ENCODE measurements at regions of chr2 and their contacts with region 1.

Region 1: DNA sequence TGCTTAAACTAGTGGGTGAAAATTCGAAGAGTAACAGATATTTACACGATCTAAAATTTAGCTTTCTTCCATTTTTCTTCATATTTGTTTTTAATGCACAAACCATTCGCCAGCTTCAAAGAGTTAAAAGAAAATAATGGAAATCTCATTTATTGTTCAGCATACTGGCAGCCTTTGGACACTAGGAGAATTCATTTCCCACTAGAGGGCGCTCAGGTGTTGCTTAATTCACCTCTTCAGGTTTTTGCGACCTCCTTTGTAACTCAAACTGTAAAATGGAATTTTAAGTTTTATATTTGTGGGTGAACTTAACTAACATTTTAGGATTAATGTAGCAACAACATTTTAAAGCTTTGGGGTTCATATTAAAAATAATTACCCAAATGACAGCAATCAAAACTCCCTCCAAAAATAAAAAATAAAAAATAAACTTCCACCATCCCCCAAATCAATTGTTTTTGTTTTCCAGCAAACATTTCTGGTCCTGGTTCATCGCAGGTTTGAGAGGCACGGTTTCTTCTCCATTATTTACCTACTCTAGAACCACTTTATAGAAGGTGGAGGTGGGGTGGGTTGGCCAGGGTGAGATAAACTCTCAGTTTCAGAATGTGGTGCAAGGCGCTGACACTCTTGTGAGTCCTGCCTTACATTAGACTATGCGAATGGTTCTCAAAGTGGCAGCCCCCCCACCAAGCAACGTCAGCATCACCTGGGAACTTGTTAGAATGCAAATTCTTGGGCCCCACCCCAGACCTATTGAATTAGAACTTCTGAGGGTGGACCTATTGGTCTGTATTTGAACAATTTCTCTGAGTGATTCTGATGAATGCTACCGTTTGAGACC is 24.7 kb upstream of the PNPT1 start:
- DNase-seq: peak; percentile 7
- ATAC-seq: peak; percentile 92
- H3K4me3 ChIP-seq: no peak overlapping the region
- H3K27ac ChIP-seq: no peak overlapping the region
- H3K4me1 ChIP-seq: no peaks in the 10 kb centered on the region
- H3K27me3 ChIP-seq: no peaks in the 10 kb centered on the region; a peak in 2 of 4 replicates
- CTCF ChIP-seq: peak; percentile 71 to 77 (median 74)
- EP300 ChIP-seq: no peak
- POLR2A ChIP-seq: no peak
- RAD21 ChIP-seq: peak; percentile 82

Region 2: DNA sequence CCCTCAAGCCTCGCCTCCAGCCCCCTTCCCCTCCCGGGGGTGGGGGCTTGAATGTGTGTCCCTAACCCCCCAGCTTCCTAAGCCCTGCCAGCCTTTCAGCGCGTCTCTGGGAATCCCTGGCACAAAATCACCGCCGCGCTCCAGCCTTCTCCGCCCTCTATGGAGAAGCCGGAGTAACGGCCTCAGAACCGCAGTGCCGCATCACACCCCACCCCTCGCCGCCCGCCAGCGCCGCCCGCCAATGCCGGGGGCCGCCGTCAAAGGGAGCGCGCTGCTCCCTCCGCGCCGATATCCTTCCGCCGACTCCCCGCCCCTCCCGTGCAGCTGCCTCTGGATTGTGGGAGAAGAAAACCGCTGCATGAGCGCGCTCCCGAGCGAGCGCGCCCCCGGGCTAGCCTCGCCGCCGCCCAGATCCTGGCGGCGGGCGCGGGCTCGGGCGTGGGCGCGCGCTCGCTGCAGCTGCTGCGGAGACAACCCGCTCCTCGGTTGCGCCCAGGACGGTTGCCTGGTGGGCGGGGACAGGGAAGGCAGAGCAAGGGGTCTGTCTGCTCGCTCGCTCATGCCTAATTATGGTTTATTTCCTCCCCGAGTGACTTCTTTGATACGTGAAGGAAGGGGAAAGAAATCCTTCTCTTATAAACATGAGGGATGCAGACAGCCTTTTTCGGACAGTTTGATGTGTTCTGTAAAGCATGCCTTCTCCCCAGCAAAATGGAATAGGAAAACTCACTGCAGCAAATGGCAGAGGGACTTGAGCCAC is 298.5 kb before region 1 on chr2 and contains the start of gene CCDC88A:
- CTCF ChIA-PET with region 1: no interaction called
- POLR2A ChIA-PET with region 1: no interaction called
- RAD21 ChIA-PET with region 1: no interaction called
- SMC1A ChIA-PET with region 1: no interaction called
- in situ Hi-C with region 1: no loop called
- intact Hi-C with region 1: no loop called
- DNase-seq: peak; percentile 59
- ATAC-seq: peak; percentile 83
- H3K4me3 ChIP-seq: peak within 1 kb of the TSS; percentile 94
- H3K27ac ChIP-seq: peak within 1 kb of the TSS; percentile 75
- H3K4me1 ChIP-seq: peaks cover 3% of the 10 kb centered on the region; the same call in 1 of the 2 replicates
- H3K27me3 ChIP-seq: no peaks in the 10 kb centered on the region
- CTCF ChIP-seq: peak in 1 of 3 experiments; percentile 15; a peak in 1 of 6 replicates
- EP300 ChIP-seq: no peak
- POLR2A ChIP-seq: peak; percentile 89
- RAD21 ChIP-seq: no peak
- polyA plus RNA-seq, gene CCDC88A: 27.7 to 30.2 TPM

Region 3: DNA sequence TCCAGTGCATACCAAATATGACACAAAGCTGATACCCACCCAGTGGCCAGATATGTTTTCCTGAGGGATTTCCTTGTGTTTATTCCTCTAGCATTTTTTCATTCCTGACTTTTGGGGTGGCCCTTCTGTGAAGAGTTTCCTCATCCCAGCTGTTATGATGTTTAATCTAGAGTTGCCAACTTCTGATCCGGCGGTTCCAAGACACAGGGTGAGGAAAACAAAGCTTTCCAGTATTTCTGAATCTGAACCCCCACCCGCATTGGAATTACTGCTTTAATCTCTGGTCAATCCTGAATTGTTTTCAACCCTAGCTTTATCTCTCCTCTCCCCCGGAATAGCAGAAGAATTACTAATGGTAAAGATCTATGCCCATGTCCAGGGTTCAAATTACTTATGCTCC is 14.5 kb after region 1 on chr2:
- CTCF ChIA-PET with region 1: interaction called, 13 read pairs
- POLR2A ChIA-PET with region 1: no interaction called
- RAD21 ChIA-PET with region 1: no interaction called
- SMC1A ChIA-PET with region 1: no interaction called
- in situ Hi-C with region 1: no loop called
- intact Hi-C with region 1: no loop called
- DNase-seq: no peak
- ATAC-seq: no peak
- H3K4me3 ChIP-seq: no peak overlapping the region
- H3K27ac ChIP-seq: no peak overlapping the region
- H3K4me1 ChIP-seq: no peaks in the 10 kb centered on the region
- H3K27me3 ChIP-seq: no peaks in the 10 kb centered on the region
- CTCF ChIP-seq: no peak
- EP300 ChIP-seq: no peak
- POLR2A ChIP-seq: no peak
- RAD21 ChIP-seq: no peak

Region 4: DNA sequence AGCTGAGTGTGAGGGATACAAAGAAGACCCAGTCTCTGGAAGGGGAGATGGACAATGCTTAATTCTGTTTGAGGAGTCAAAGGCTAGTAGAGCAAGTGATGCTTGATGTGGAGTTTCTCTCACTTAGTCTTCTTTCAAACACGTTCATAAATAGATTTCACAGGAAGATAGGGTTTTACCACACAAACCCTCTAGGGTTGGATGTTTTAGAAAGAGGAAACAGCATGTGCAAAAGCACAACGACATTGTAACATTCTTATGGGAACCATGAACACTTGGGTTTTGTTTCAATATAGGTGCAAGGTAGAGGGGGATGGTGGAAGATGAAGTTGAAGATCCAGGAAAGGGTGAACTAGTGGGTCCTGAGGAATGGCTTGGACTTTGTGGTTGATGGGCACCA is 215.9 kb after region 1 on chr2:
- CTCF ChIA-PET with region 1: interaction called, 13 read pairs
- POLR2A ChIA-PET with region 1: no interaction called
- RAD21 ChIA-PET with region 1: no interaction called
- SMC1A ChIA-PET with region 1: no interaction called
- in situ Hi-C with region 1: no loop called
- intact Hi-C with region 1: no loop called
- DNase-seq: no peak
- ATAC-seq: no peak
- H3K4me3 ChIP-seq: no peak overlapping the region
- H3K27ac ChIP-seq: no peak overlapping the region
- H3K4me1 ChIP-seq: no peaks in the 10 kb centered on the region
- H3K27me3 ChIP-seq: no peaks in the 10 kb centered on the region; a peak in 1 of 4 replicates
- CTCF ChIP-seq: no peak
- EP300 ChIP-seq: no peak
- POLR2A ChIP-seq: no peak
- RAD21 ChIP-seq: no peak

Region 5: DNA sequence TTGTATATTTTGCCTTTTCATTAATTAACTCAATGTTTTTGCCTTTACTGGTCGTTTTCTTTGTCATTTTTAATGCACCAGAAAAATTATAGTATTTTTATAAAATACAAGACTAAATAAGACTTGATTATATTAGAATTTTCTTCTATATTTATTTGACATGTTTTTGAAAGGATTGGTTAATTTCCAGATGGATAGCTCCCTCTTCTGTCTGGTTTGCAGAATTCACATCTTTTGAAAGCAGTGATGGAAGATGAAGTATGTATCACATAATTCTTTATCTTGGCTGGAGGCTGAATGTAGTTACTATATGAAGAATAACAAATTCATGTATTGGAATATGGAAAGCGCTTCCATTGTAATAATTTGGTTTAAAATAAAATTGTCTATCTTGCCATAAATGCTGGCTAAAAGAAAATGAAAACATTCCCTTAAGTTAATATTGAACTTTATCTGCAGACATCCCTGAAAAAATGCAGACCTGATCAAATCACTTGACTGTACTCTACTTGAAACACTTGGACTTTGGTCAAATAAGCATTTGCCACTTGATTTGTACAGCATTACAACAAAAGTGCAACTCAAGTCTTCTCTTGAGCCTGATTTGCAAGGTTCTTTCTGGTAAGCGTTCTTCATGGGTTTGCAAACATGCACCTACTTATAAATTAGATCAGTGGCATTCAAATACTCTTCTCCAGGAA is 291.5 kb after region 1 on chr2:
- CTCF ChIA-PET with region 1: interaction called, 4 read pairs
- POLR2A ChIA-PET with region 1: no interaction called
- RAD21 ChIA-PET with region 1: no interaction called
- SMC1A ChIA-PET with region 1: no interaction called
- in situ Hi-C with region 1: no loop called
- intact Hi-C with region 1: loop called (anchors 1 kb)
- DNase-seq: no peak
- ATAC-seq: no peak
- H3K4me3 ChIP-seq: no peak overlapping the region
- H3K27ac ChIP-seq: no peak overlapping the region
- H3K4me1 ChIP-seq: no peaks in the 10 kb centered on the region
- H3K27me3 ChIP-seq: no peaks in the 10 kb centered on the region
- CTCF ChIP-seq: peak in 2 of 3 experiments; percentile 42 to 46; a peak in 4 of 6 replicates
- EP300 ChIP-seq: no peak
- POLR2A ChIP-seq: no peak
- RAD21 ChIP-seq: peak; percentile 53

Region 6: DNA sequence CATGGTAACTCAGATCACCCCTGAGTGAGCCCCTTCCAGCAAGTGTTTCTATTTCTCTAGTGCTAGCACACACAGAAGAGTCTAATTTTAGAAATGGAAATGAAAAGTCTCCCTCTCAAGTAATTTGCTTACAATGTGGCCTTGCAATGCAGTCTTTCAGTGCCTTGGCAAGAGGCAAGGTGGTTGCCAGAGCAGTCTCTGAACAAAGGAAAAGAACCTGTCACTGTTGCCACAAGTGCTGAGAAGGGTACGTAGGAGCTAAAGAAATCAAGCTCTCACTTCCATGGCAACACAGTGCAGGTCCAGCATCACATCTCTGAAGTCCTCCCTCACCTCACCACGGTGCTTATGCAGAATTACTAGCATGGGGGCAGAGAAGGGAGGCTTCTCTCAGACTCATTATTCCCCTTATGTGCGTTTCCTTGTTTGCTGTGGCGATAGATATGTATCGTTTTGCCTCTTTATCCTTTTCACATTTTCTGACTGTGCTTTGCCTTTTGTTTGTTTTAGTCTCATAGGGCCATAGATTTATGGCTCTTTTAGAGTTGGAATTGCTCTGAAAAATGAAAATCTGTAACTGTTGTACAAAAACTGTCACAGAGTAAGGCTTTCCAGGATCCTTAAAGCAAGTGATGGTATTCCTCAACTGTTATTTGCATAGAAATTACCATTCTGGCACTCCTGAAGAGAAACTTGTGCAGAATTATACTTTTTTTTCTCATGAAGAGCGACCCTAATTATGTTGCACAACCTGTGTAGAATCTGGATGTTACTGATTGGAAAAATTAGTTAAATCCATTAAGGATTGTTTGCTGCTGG is 630.2 kb after region 1 on chr2:
- CTCF ChIA-PET with region 1: no interaction called
- POLR2A ChIA-PET with region 1: no interaction called
- RAD21 ChIA-PET with region 1: no interaction called
- SMC1A ChIA-PET with region 1: no interaction called
- in situ Hi-C with region 1: no loop called
- intact Hi-C with region 1: no loop called
- DNase-seq: peak; percentile 13
- ATAC-seq: peak; percentile 79
- H3K4me3 ChIP-seq: no peak overlapping the region
- H3K27ac ChIP-seq: no peak overlapping the region
- H3K4me1 ChIP-seq: no peaks in the 10 kb centered on the region; the same call in 1 of the 2 replicates
- H3K27me3 ChIP-seq: no peaks in the 10 kb centered on the region
- CTCF ChIP-seq: no peak
- EP300 ChIP-seq: no peak
- POLR2A ChIP-seq: no peak
- RAD21 ChIP-seq: no peak

Region 7: GRCh38 chr2:57516698-57517340 is 1798.4 kb after region 1 on chr2:
- CTCF ChIA-PET with region 1: no interaction called
- POLR2A ChIA-PET with region 1: no interaction called
- RAD21 ChIA-PET with region 1: no interaction called
- SMC1A ChIA-PET with region 1: no interaction called
- in situ Hi-C with region 1: loop called (anchors 25 kb)
- intact Hi-C with region 1: no loop called
- DNase-seq: peak; percentile 7
- ATAC-seq: peak; percentile 90
- H3K4me3 ChIP-seq: no peak overlapping the region
- H3K27ac ChIP-seq: no peak overlapping the region
- H3K4me1 ChIP-seq: no peaks in the 10 kb centered on the region
- H3K27me3 ChIP-seq: no peaks in the 10 kb centered on the region
- CTCF ChIP-seq: peak; percentile 38 to 58 (median 38); a peak in 5 of 6 replicates
- EP300 ChIP-seq: no peak
- POLR2A ChIP-seq: no peak
- RAD21 ChIP-seq: peak; percentile 67